Esophagus muscularis mucosa (tissue), 4 donors: ENCODE measurements at regions of chr13 and their contacts with region 1.

Region 1: DNA sequence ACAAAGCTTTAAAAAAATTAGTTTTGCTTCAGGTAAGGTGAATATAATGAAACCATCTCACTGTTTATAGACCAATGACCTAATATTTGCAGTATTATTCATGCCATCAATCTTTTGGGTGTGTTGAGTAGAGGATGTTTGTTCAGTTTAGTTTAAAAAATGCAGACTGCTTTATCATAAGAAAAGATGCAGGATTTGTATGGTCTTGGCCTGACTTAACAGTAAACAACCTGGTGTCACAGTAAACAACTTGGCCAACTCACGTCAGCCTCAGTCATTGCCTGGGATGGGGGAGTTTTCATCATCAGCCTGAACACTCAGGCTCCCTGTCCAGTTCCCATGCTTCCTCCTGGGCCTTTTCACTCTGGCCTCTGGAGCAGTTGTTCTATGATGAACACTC is 55.1 kb downstream of the LMO7 start:
- DNase-seq: no peak
- H3K4me3 ChIP-seq: no peak overlapping the region
- H3K27ac ChIP-seq: no peak overlapping the region
- H3K4me1 ChIP-seq: peaks cover 0 to 4% (median 2%) of the 10 kb centered on the region in 4 donors
- H3K27me3 ChIP-seq: no peaks in the 10 kb centered on the region
- CTCF ChIP-seq: no peak
- EP300 ChIP-seq: no peak
- POLR2A ChIP-seq: no peak

Region 2: DNA sequence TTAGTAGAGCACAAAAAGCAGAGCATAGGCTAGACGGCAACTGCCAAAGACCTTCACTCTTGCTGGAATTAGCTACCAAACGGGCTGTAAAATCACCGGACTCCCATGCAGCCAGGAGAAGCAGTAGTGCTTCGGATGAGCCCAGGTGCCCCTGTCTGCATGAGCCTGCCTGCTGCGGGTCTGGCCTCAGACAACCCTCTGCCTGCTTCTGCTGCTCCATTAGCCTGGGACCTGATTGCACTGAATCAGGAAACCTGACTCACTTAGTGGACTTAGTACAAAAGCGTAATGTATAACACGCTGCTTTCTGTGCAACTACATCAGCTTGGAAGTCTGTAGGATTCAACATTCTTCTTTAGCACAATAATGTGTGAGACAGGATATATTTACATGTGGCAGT is 114.9 kb after region 1 on chr13:
- intact Hi-C with region 1: loop called (anchors 5 kb)
- DNase-seq: no peak
- H3K4me3 ChIP-seq: no peak overlapping the region
- H3K27ac ChIP-seq: no peak overlapping the region
- H3K4me1 ChIP-seq: peaks cover 0 to 3% (median 0%) of the 10 kb centered on the region in 4 donors
- H3K27me3 ChIP-seq: no peaks in the 10 kb centered on the region
- CTCF ChIP-seq: no peak
- EP300 ChIP-seq: no peak
- POLR2A ChIP-seq: no peak

Region 3: DNA sequence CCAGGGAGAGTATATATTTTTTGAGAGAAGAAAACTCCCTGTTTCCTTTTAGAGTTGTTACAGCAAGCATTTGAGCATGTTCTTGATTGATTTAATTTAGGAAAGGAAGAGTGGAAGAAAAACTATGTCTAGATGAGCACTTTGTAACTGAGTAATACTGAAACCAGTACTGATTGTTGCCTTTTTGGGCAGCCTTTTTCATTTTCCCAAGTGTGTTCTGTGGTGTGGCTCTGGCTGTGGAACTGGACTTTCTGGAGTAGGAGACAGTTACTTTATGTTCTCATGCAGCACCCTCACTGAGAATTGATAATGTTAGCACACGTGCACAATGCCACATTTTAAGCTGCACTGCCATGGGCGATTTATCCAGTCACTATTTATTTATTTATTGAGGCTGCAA is 156.4 kb after region 1 on chr13:
- intact Hi-C with region 1: loop called (anchors 10 kb)
- DNase-seq: no peak
- H3K4me3 ChIP-seq: no peak overlapping the region
- H3K27ac ChIP-seq: no peak overlapping the region
- H3K4me1 ChIP-seq: no peaks in the 10 kb centered on the region
- H3K27me3 ChIP-seq: no peaks in the 10 kb centered on the region
- CTCF ChIP-seq: no peak
- EP300 ChIP-seq: no peak
- POLR2A ChIP-seq: no peak

Region 4: GRCh38 chr13:75934889-75935288 is 243.7 kb after region 1 on chr13:
- intact Hi-C with region 1: no loop called
- DNase-seq: no peak
- H3K4me3 ChIP-seq: no peak overlapping the region
- H3K27ac ChIP-seq: no peak overlapping the region
- H3K4me1 ChIP-seq: peaks cover 5 to 10% (median 8%) of the 10 kb centered on the region in 4 donors
- H3K27me3 ChIP-seq: no peaks in the 10 kb centered on the region
- CTCF ChIP-seq: no peak
- EP300 ChIP-seq: no peak
- POLR2A ChIP-seq: no peak

Region 5: GRCh38 chr13:76473552-76474134 is 782.5 kb after region 1 on chr13:
- intact Hi-C with region 1: loop called (anchors 5 kb)
- DNase-seq: no peak
- H3K4me3 ChIP-seq: no peak overlapping the region
- H3K27ac ChIP-seq: no peak overlapping the region
- H3K4me1 ChIP-seq: peaks cover 4 to 20% (median 15%) of the 10 kb centered on the region in 4 donors
- H3K27me3 ChIP-seq: no peaks in the 10 kb centered on the region
- CTCF ChIP-seq: peak; percentile 81 to 90 (median 84)
- EP300 ChIP-seq: no peak
- POLR2A ChIP-seq: no peak

Region 6: DNA sequence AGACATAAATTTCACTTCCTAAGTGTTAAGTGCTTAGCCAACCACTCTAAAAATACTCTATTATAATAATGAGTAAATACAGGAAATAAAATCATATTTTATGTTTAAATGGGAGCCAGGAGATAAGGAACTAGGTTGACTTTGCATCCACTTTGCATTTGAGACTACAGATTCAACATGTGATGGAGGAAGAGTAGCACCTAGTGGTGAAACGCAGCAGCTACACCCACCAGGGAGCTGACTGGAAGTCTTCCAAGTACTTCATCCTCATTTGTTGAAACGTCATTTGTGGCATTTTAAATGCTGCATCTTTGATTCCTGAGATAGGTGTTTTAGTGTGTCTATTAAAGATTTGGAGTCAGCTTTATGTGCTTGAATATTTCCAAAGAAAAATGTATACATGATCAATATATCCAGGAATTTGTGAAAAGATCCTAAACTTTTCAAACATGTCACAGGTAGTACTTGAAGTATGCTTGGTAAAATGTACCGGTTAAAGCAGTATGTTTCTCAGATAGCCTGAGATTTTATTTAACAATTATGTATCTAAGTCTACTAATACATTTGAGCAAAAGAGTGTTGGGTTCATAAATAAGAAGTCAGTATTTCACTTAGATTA is 1212.5 kb after region 1 on chr13:
- intact Hi-C with region 1: loop called (anchors 2 kb)
- DNase-seq: no peak
- H3K4me3 ChIP-seq: no peak overlapping the region
- H3K27ac ChIP-seq: no peak overlapping the region
- H3K4me1 ChIP-seq: peaks cover 0 to 6% (median 0%) of the 10 kb centered on the region in 4 donors
- H3K27me3 ChIP-seq: no peaks in the 10 kb centered on the region
- CTCF ChIP-seq: peak; percentile 96 to 99 (median 96)
- EP300 ChIP-seq: no peak
- POLR2A ChIP-seq: no peak

Region 7: DNA sequence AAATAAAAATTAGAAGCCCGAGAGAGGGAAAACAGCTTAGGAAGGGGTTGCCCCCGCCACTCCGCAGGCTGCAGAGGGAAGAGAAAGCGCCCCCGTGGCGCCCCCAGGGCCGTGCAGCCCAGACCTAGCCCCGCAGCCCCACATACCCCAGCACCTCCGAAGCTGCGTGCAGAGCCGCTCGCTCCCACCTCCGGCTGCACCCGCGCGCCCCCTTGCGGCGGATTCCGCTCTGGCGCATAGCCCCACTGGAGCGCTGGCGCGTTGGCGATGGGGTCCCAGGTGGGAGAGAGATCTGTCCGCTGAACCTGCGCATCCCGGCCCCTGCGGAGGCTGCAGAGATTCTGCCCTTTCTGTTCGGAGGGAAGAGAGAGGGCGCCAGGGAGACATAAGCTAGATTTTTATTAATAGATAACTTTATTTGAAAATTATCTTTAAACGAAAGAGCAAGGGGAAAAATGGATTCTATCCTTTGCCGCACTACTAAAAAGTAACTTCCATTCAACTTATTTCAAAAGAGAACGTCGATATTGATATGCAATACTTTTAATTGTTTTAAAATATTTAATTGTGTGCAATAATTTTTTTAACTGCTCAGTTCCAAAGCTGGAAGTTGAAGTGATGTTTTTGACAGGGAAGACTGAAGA is 1289.0 kb after region 1 on chr13:
- intact Hi-C with region 1: loop called (anchors 10 kb)
- DNase-seq: no peak
- H3K4me3 ChIP-seq: peak overlapping the region; percentile 32 to 50 (median 36)
- H3K27ac ChIP-seq: no peak overlapping the region
- H3K4me1 ChIP-seq: peaks cover 10 to 22% (median 14%) of the 10 kb centered on the region in 4 donors
- H3K27me3 ChIP-seq: no peaks in the 10 kb centered on the region
- CTCF ChIP-seq: peak; percentile 77 to 99 (median 91)
- EP300 ChIP-seq: no peak
- POLR2A ChIP-seq: no peak